H1 (cell line): ENCODE measurements at regions of chr6 and their contacts with region 1.

Region 1: DNA sequence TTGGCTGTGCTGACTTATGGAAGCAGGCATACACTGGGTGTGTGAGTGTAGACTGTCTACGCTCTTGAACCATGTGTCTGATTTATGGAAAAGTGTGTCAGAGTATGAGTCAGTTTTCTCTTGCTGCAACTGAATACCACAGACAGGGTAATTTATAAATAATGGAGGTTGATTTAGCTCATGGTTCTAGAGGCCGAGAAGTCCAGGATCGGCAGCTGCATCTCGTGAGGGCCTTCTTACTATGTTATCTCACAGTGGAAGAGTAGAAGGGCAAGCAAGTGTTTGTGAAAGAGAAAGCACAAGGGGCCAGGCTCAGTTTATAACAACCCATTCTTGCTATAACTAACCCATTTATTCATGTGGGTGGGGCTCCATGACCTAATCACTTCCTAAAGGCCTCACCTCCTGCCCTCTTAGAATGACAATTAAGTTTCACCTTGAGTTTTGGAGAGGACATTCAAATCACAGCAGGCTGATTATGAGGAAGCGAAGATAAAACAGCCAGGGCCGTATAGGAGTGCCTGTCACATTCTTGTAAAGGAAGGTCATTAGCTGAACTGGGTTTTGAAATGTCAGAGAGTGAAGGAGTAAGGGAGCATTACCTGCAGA is 6.7 kb downstream of the GPR31 start:
- DNase-seq: no peak
- H3K4me3 ChIP-seq: no peak overlapping the region
- H3K27ac ChIP-seq: no peak overlapping the region
- H3K4me1 ChIP-seq: peaks cover 8 to 22% (median 19%) of the 10 kb centered on the region in 4 experiments
- H3K27me3 ChIP-seq: peaks cover 0 to 3% (median 0%) of the 10 kb centered on the region in 4 experiments; a peak in 2 of 7 replicates
- CTCF ChIP-seq: no peak
- EP300 ChIP-seq: no peak
- POLR2A ChIP-seq: no peak
- RAD21 ChIP-seq: no peak

Region 2: DNA sequence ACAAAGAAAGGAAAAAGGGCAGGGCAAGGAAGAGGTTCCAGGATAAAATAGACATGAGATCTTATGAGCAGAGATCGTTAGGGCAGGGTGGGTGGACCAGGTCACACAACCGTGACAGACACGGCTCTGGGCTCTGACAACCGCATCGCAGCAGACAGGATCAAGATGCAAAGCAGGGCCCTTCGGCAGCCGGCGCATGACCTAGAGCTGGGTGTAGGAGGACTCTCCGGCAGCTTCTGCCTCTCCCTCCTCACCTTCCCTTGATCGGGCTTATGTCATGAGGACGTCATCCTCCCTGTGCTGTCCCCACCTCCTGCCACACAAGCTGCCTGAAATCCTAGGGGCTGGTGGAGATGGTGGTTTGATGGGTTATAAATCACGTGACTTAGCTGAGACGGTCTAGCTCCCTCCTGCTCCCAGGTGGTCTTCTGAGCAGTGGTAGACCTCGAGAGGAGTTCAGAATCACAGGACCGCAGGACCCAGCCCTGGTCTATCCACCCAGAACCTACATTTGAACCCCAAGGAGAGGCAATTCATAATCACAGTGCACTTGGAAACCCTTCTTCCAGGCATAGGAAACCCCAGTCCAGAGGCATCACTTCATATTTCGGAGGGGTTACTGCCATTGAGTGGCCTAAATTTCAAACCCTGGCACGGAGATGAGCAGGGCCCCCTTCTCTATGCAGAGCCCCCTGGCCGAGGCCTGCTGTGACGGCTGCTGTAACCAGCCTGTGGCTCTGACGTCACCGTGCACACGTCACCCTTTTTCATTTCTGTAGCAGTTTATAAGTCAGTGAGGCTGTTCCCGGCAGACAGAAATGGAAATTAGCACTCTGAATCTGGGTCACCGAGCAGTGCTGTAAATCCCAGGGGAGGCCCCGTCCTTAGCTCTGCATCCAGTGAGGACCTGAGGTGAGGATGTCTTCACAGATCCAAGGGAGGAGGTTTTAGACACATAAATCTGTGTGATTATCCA is 36.8 kb before region 1 on chr6:
- CTCF ChIA-PET with region 1: no interaction called
- POLR2A ChIA-PET with region 1: no interaction called
- DNase-seq: no peak
- H3K4me3 ChIP-seq: no peak overlapping the region
- H3K27ac ChIP-seq: no peak overlapping the region
- H3K4me1 ChIP-seq: peaks cover 0 to 5% (median 0%) of the 10 kb centered on the region in 4 experiments; a peak in 3 of 7 replicates
- H3K27me3 ChIP-seq: no peaks in the 10 kb centered on the region
- CTCF ChIP-seq: no peak
- EP300 ChIP-seq: no peak
- POLR2A ChIP-seq: no peak
- RAD21 ChIP-seq: no peak

Region 3: DNA sequence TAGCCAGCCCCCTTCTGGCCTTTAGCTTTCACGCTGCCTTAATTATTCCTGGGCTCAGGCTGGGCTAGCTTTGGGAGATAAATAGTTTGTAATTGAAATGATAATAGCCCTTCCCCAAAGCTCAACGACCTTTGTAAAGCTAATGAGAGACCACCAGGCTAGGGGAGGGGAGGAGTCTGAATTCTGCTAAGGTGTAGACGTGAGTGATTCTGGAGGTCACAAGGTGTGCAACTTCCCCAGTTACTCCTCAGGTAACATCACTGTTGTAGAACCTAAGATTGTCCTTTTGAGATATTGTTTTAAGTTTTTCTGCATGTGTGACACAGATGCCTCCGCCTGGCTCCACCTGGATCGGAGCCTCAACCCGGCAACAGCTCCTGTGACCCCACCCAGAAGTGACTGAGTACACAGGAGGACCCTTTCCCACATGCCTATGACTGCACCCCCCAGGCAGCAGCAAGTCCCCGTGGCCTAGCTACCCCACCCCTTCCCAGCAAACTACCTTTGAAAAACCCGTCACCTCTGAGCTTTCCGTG is 12.5 kb after region 1 on chr6:
- CTCF ChIA-PET with region 1: interaction called, 13 read pairs
- POLR2A ChIA-PET with region 1: interaction called, 14 read pairs
- DNase-seq: peak; percentile 78 to 88
- H3K4me3 ChIP-seq: peak overlapping the region in 3 of 4 experiments; percentile 15 to 41 (median 30); a peak in 4 of 8 replicates
- H3K27ac ChIP-seq: peak overlapping the region; percentile 88
- H3K4me1 ChIP-seq: peaks cover 8 to 27% (median 22%) of the 10 kb centered on the region in 4 experiments
- H3K27me3 ChIP-seq: no peaks in the 10 kb centered on the region; a peak in 1 of 7 replicates
- CTCF ChIP-seq: peak in 1 of 3 experiments; percentile 6; a peak in 1 of 4 replicates
- EP300 ChIP-seq: no peak
- POLR2A ChIP-seq: peak in 1 of 2 experiments; percentile 52; a peak in 2 of 3 replicates
- RAD21 ChIP-seq: no peak; a peak in 1 of 4 replicates

Region 4: DNA sequence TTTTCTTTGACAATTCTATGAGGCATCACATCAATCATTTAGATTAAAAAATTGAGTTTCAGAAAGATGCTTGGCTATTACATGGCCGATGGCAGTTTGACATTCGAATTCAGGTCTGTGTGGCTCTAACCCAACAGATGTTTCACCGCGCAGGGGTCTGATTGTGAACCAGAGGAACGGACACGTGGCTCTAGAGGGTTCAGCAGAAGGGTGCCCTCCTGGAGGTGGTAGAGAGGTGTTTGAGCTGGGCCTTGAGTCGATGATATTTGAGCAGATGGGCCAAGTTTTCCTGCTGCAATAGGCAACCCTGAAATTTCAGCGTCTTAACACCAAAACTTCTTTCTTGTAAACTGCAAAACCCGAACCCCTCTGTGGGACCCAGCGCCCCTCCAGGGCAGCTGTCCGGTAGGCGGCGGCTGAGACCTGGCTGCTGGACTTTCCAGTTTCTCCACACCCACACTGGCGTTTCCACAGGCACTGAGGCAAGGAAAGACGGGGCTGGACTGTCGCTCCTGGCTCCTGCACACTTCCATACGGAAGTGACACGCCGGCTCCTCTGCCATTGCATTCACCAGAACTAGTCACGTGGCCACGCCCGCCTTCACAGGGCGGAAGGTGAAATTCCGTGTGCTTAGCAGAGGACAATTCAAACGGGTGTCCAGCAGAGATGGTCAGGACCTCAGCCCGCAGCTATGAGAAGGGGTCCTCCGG is 664.4 kb after region 1 on chr6:
- CTCF ChIA-PET with region 1: no interaction called
- POLR2A ChIA-PET with region 1: no interaction called
- DNase-seq: no peak
- H3K4me3 ChIP-seq: no peak overlapping the region
- H3K27ac ChIP-seq: no peak overlapping the region
- H3K4me1 ChIP-seq: peaks cover 0 to 11% (median 7%) of the 10 kb centered on the region in 4 experiments; a peak in 4 of 7 replicates
- H3K27me3 ChIP-seq: no peaks in the 10 kb centered on the region
- CTCF ChIP-seq: no peak
- EP300 ChIP-seq: no peak
- POLR2A ChIP-seq: no peak
- RAD21 ChIP-seq: no peak